CD4-positive, alpha-beta T cell (primary cell): ENCODE measurements at regions of chr2 and their contacts with region 1.

Region 1: GRCh38 chr2:96208143-96209010 is at the start of gene STARD7:
- DNase-seq: peak; percentile 94 to 98 (median 96)
- ATAC-seq: peak; percentile 87
- H3K4me3 ChIP-seq: peak within 1 kb of the TSS; percentile 85
- H3K4me3 Mint-ChIP-seq: peak within 1 kb of the TSS; percentile 96
- H3K27ac ChIP-seq: peak within 1 kb of the TSS; percentile 57 to 87
- H3K27ac Mint-ChIP-seq: peak within 1 kb of the TSS; percentile 89
- H3K4me1 ChIP-seq: peaks cover 49% of the 10 kb centered on the region
- H3K4me1 Mint-ChIP-seq: peaks cover 57% of the 10 kb centered on the region
- H3K27me3 ChIP-seq: no peaks in the 10 kb centered on the region
- H3K27me3 Mint-ChIP-seq: no peaks in the 10 kb centered on the region
- CTCF ChIP-seq: peak; percentile 17
- total RNA-seq, gene STARD7: 57.4 to 58.6 TPM

Region 2: GRCh38 chr2:95734976-95735890 is 473.1 kb before region 1 on chr2:
- CTCF ChIA-PET with region 1: no interaction called
- POLR2A ChIA-PET with region 1: no interaction called
- intact Hi-C with region 1: no loop called
- DNase-seq: peak in 3 of 14 experiments; percentile 10 to 27 (median 23)
- ATAC-seq: no peak
- H3K4me3 ChIP-seq: no peak overlapping the region
- H3K4me3 Mint-ChIP-seq: no peak overlapping the region
- H3K27ac ChIP-seq: no peak overlapping the region
- H3K27ac Mint-ChIP-seq: no peak overlapping the region
- H3K4me1 ChIP-seq: no peaks in the 10 kb centered on the region
- H3K4me1 Mint-ChIP-seq: no peaks in the 10 kb centered on the region
- H3K27me3 ChIP-seq: peaks cover 0 to 5% of the 10 kb centered on the region in 2 experiments
- H3K27me3 Mint-ChIP-seq: peaks cover 61% of the 10 kb centered on the region
- CTCF ChIP-seq: no peak

Region 3: GRCh38 chr2:96241900-96242611 is 33.7 kb after region 1 on chr2:
- CTCF ChIA-PET with region 1: no interaction called
- POLR2A ChIA-PET with region 1: interaction called, 26 read pairs
- intact Hi-C with region 1: no loop called
- DNase-seq: peak in 11 of 14 experiments; percentile 15 to 84 (median 40)
- ATAC-seq: peak; percentile 83
- H3K4me3 ChIP-seq: peak overlapping the region; percentile 6
- H3K4me3 Mint-ChIP-seq: peak overlapping the region; percentile 66
- H3K27ac ChIP-seq: peak overlapping the region; percentile 61 to 92
- H3K27ac Mint-ChIP-seq: peak overlapping the region; percentile 94
- H3K4me1 ChIP-seq: peaks cover 49% of the 10 kb centered on the region
- H3K4me1 Mint-ChIP-seq: peaks cover 47% of the 10 kb centered on the region
- H3K27me3 ChIP-seq: no peaks in the 10 kb centered on the region
- H3K27me3 Mint-ChIP-seq: no peaks in the 10 kb centered on the region
- CTCF ChIP-seq: no peak

Region 4: GRCh38 chr2:96256611-96257113 is 48.3 kb after region 1 on chr2:
- CTCF ChIA-PET with region 1: no interaction called
- POLR2A ChIA-PET with region 1: interaction called, 11 read pairs
- intact Hi-C with region 1: no loop called
- DNase-seq: no peak
- ATAC-seq: peak; percentile 50
- H3K4me3 ChIP-seq: peak overlapping the region; percentile 8
- H3K4me3 Mint-ChIP-seq: peak overlapping the region; percentile 74
- H3K27ac ChIP-seq: peak overlapping the region; percentile 3 to 51
- H3K27ac Mint-ChIP-seq: peak overlapping the region; percentile 81
- H3K4me1 ChIP-seq: peaks cover 55% of the 10 kb centered on the region
- H3K4me1 Mint-ChIP-seq: peaks cover 66% of the 10 kb centered on the region
- H3K27me3 ChIP-seq: no peaks in the 10 kb centered on the region
- H3K27me3 Mint-ChIP-seq: no peaks in the 10 kb centered on the region
- CTCF ChIP-seq: no peak

Region 5: GRCh38 chr2:96265840-96266679 is 57.7 kb after region 1 on chr2 and contains the starts of genes CIAO1 and TMEM127:
- CTCF ChIA-PET with region 1: interaction called, 5 read pairs
- POLR2A ChIA-PET with region 1: interaction called, 13 read pairs
- intact Hi-C with region 1: loop called (anchors 1 kb)
- DNase-seq: peak; percentile 95 to 99 (median 97)
- ATAC-seq: peak; percentile 92
- H3K4me3 ChIP-seq: peak within 1 kb of the TSS; percentile 86
- H3K4me3 Mint-ChIP-seq: peak within 1 kb of the TSS; percentile 92
- H3K27ac ChIP-seq: peak within 1 kb of the TSS; percentile 85 to 87
- H3K27ac Mint-ChIP-seq: peak within 1 kb of the TSS; percentile 82
- H3K4me1 ChIP-seq: peaks cover 51% of the 10 kb centered on the region
- H3K4me1 Mint-ChIP-seq: peaks cover 43% of the 10 kb centered on the region
- H3K27me3 ChIP-seq: no peaks in the 10 kb centered on the region
- H3K27me3 Mint-ChIP-seq: no peaks in the 10 kb centered on the region
- CTCF ChIP-seq: no peak
- total RNA-seq, gene CIAO1: 55.4 to 55.6 TPM
- total RNA-seq, gene TMEM127: 34.2 to 36.0 TPM

Region 6: DNA sequence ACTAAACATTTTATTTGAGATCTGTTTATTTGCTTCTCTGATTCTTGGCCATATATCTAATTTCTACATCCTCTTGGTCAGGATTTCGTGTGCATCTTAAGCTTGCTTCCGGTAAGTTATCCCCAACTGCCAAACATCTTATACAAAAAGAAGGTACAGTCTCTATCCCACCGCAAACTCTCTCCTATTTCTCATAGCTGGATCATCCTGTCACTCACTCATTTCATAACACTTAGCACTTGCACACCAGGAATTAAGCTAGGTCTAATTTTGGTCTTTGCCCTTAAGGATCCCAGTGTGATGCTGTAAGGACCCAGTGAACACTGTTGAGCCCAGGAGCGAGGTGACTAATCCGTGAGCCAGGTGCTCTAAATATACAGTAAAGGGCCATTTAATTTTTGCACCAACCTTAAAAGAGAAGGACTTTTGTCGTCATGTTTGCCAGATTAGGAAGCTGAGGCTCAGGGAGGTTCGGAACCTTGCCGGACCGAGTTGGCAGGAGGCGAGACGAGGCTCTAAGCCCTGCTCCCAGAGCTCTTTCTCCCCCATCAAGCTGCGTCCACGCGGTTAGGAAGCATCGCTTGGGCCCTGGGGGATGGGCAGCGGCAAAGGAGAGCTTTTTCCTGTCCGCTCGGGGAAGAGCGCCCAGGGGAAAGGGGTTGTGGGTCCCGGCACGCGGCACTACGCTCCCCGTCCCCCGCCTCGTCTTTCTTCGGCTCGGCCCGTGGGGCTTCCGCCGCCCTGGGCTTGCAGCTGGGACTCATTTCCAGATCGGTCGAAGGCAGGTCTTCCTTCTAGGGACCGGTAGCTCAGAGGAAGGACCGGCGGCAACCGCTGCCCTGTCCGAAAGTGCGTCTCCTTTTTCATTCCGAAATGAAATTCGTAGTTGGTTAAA is 112.6 kb after region 1 on chr2:
- CTCF ChIA-PET with region 1: no interaction called
- POLR2A ChIA-PET with region 1: interaction called, 4 read pairs
- intact Hi-C with region 1: loop called in 1 of 2 experiments (anchors 10 kb)
- DNase-seq: peak in 6 of 14 experiments; percentile 1 to 50 (median 24)
- ATAC-seq: no peak
- H3K4me3 ChIP-seq: peak overlapping the region; percentile 92
- H3K4me3 Mint-ChIP-seq: peak overlapping the region; percentile 84
- H3K27ac ChIP-seq: peak overlapping the region in 1 of 2 donors; percentile 63
- H3K27ac Mint-ChIP-seq: peak overlapping the region; percentile 16
- H3K4me1 ChIP-seq: peaks cover 64% of the 10 kb centered on the region
- H3K4me1 Mint-ChIP-seq: peaks cover 46% of the 10 kb centered on the region
- H3K27me3 ChIP-seq: no peaks in the 10 kb centered on the region
- H3K27me3 Mint-ChIP-seq: peaks cover 3% of the 10 kb centered on the region
- CTCF ChIP-seq: no peak